Adrenal gland (tissue), 19 donors: ENCODE measurements at regions of chr22 and their contacts with region 1.

Region 1: GRCh38 chr22:32660292-32660691 is 141.2 kb upstream of the TIMP3 start:
- DNase-seq: peak; percentile 57 to 85 (median 72)
- H3K4me3 ChIP-seq: no peak overlapping the region
- H3K27ac ChIP-seq: no peak overlapping the region
- H3K4me1 ChIP-seq: no peaks in the 10 kb centered on the region
- H3K27me3 ChIP-seq: no peaks in the 10 kb centered on the region
- CTCF ChIP-seq: peak; percentile 48 to 87 (median 73)
- POLR2A ChIP-seq: no peak

Region 2: GRCh38 chr22:32528984-32529982 is 131.0 kb before region 1 on chr22:
- intact Hi-C with region 1: loop called in 1 of 2 experiments (anchors 5 kb)
- DNase-seq: peak; percentile 82 to 95 (median 90)
- H3K4me3 ChIP-seq: no peak overlapping the region
- H3K27ac ChIP-seq: peak overlapping the region in 4 of 5 donors; percentile 6 to 85 (median 34)
- H3K4me1 ChIP-seq: peaks cover 0 to 18% of the 10 kb centered on the region in 2 donors
- H3K27me3 ChIP-seq: no peaks in the 10 kb centered on the region
- CTCF ChIP-seq: peak; percentile 81 to 94 (median 88)
- POLR2A ChIP-seq: no peak

Region 3: DNA sequence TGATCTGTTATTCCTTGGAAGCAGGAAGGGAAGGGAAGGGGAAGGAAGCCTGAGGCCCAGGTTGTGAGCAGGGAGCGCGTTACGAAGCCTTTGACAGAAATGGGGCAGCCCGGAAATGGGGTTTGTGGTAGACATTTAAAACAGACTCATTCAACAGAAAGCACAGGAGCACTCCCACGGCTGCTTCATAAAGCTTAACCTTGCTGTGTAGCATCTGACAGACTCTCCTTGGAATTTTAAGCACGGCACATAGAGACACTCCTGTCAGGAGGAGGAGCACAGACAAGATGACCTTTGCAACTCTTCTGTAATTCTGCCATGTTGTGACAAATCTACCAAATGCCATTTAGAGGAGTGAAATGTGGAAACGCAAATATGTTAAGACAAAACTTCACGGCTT is 54.1 kb before region 1 on chr22:
- intact Hi-C with region 1: no loop called
- DNase-seq: no peak
- H3K4me3 ChIP-seq: no peak overlapping the region
- H3K27ac ChIP-seq: no peak overlapping the region
- H3K4me1 ChIP-seq: no peaks in the 10 kb centered on the region
- H3K27me3 ChIP-seq: no peaks in the 10 kb centered on the region
- CTCF ChIP-seq: no peak
- POLR2A ChIP-seq: no peak

Region 4: DNA sequence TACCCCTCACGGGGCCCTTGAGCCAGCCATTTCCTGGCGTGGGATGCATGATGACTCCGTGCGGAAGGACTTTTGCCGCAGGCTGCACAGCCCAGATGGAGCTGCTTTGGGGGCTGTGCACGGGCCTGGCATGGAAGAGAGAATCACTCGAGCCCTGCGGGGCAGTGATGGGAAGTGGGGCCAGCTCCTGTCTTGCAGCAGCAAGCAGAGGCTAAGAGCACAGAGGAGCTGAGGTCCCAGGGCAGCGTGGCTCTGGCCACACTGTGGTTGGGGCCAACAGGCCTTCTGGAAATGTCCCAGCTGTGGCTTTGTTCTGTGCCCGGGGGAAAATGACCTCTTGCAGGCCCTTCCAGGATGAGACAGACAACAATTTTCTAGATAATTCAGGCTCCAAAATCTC is 48.5 kb after region 1 on chr22:
- intact Hi-C with region 1: no loop called
- DNase-seq: no peak
- H3K4me3 ChIP-seq: no peak overlapping the region
- H3K27ac ChIP-seq: no peak overlapping the region
- H3K4me1 ChIP-seq: no peaks in the 10 kb centered on the region
- H3K27me3 ChIP-seq: no peaks in the 10 kb centered on the region
- CTCF ChIP-seq: no peak
- POLR2A ChIP-seq: no peak

Region 5: GRCh38 chr22:32723643-32724042 is 63.4 kb after region 1 on chr22:
- intact Hi-C with region 1: loop called in 1 of 2 experiments (anchors 10 kb)
- DNase-seq: peak; percentile 47 to 72 (median 59)
- H3K4me3 ChIP-seq: no peak overlapping the region
- H3K27ac ChIP-seq: peak overlapping the region in 2 of 5 donors; percentile 61 to 62
- H3K4me1 ChIP-seq: peaks cover 0 to 11% of the 10 kb centered on the region in 2 donors
- H3K27me3 ChIP-seq: no peaks in the 10 kb centered on the region
- CTCF ChIP-seq: no peak
- POLR2A ChIP-seq: no peak

Region 6: GRCh38 chr22:33000342-33001280 is 340.3 kb after region 1 on chr22:
- intact Hi-C with region 1: loop called (anchors 2 to 10 kb)
- DNase-seq: peak; percentile 43 to 79 (median 59)
- H3K4me3 ChIP-seq: no peak overlapping the region
- H3K27ac ChIP-seq: no peak overlapping the region
- H3K4me1 ChIP-seq: no peaks in the 10 kb centered on the region
- H3K27me3 ChIP-seq: no peaks in the 10 kb centered on the region
- CTCF ChIP-seq: peak; percentile 79 to 93 (median 88)
- POLR2A ChIP-seq: no peak